ENCODE measurements at regions of chr7 and their contacts with region 1.

Region 1: DNA sequence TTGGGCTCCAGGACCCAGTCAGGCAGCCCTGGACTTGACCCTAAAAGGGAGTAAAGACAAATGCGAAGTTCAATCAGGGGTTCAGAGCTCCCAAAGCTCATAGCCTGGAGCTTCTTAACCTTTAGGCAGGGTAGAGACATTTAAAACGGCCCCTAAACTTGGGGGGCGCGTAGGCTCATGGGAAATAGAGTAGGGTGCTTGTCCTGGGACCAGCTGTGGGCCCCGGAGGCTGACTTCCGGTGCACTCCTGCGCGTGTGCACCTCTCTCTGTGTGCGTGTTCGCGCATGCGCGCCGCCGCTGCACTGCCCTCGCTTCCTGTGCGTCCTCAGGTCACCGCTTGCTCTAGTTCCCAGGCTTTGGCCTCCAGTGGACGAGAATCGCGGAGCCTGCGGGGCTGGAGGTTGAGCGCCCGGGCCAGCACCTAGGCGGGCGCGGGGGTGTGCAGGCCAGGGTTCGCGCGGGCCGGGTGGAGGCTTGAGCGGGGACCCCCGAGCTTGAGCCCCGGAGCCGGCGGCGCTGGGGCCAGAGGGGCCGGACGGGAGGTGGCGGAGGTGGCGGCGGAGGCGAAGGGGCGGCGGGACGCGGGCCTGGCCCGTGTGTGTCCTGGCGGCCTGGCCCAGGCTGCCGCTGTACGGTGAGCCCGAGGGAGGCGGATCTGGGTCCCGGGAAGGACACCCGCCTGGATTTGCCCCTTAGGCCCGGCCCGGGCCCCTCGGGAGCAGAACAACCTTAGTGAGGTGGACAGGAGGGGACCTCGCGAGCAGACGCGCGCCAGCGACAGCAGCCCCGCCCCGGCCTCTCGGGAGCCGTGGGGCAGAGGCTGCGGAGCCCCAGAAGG is at the start of gene RBAK:
- DNase-seq: peak; percentile 72 to 95 (median 85)
- ATAC-seq: peak; percentile 99 to 100 (median 100)
- H3K4me3 ChIP-seq: peak within 1 kb of the TSS; percentile 75 to 76
- H3K4me3 Mint-ChIP-seq: peak within 1 kb of the TSS; percentile 91 to 93 (median 92)
- H3K27ac ChIP-seq: peak within 1 kb of the TSS; percentile 59
- H3K27ac Mint-ChIP-seq: peak within 1 kb of the TSS; percentile 88
- H3K4me1 ChIP-seq: peaks cover 4 to 25% of the 10 kb centered on the region in 2 experiments
- H3K4me1 Mint-ChIP-seq: peaks cover 43 to 51% (median 43%) of the 10 kb centered on the region in 3 donors
- H3K27me3 ChIP-seq: no peaks in the 10 kb centered on the region
- H3K27me3 Mint-ChIP-seq: no peaks in the 10 kb centered on the region
- total RNA-seq, gene RBAK: 14.8 to 21.4 (median 17.4) TPM

Region 2: GRCh38 chr7:4973728-4974198 is 72.0 kb before region 1 on chr7:
- CTCF ChIA-PET with region 1: interaction called, 7 to 13 read pairs
- POLR2A ChIA-PET with region 1: no interaction called
- DNase-seq: peak; percentile 89 to 96 (median 93)
- ATAC-seq: peak; percentile 96 to 98 (median 97)
- H3K4me3 ChIP-seq: peak overlapping the region; percentile 58 to 70
- H3K4me3 Mint-ChIP-seq: peak overlapping the region; percentile 91 to 96 (median 94)
- H3K27ac ChIP-seq: peak overlapping the region; percentile 63
- H3K27ac Mint-ChIP-seq: peak overlapping the region; percentile 96 to 97
- H3K4me1 ChIP-seq: peaks cover 0 to 23% of the 10 kb centered on the region in 2 experiments
- H3K4me1 Mint-ChIP-seq: peaks cover 32 to 39% (median 33%) of the 10 kb centered on the region in 3 donors
- H3K27me3 ChIP-seq: no peaks in the 10 kb centered on the region
- H3K27me3 Mint-ChIP-seq: no peaks in the 10 kb centered on the region

Region 3: GRCh38 chr7:5035276-5035675 is 10.5 kb before region 1 on chr7:
- CTCF ChIA-PET with region 1: no interaction called
- POLR2A ChIA-PET with region 1: no interaction called
- DNase-seq: no peak
- ATAC-seq: no peak
- H3K4me3 ChIP-seq: no peak overlapping the region
- H3K4me3 Mint-ChIP-seq: no peak overlapping the region
- H3K27ac ChIP-seq: no peak overlapping the region
- H3K27ac Mint-ChIP-seq: no peak overlapping the region
- H3K4me1 ChIP-seq: no peaks in the 10 kb centered on the region
- H3K4me1 Mint-ChIP-seq: no peaks in the 10 kb centered on the region
- H3K27me3 ChIP-seq: no peaks in the 10 kb centered on the region
- H3K27me3 Mint-ChIP-seq: no peaks in the 10 kb centered on the region

Measured in T-cell (primary cell).